Activated CD4-positive, alpha-beta T cell treated with anti-CD3 and anti-CD28 coated beads for 36 hours (primary cell): ENCODE measurements at regions of chr3 and their contacts with region 1.

Region 1: DNA sequence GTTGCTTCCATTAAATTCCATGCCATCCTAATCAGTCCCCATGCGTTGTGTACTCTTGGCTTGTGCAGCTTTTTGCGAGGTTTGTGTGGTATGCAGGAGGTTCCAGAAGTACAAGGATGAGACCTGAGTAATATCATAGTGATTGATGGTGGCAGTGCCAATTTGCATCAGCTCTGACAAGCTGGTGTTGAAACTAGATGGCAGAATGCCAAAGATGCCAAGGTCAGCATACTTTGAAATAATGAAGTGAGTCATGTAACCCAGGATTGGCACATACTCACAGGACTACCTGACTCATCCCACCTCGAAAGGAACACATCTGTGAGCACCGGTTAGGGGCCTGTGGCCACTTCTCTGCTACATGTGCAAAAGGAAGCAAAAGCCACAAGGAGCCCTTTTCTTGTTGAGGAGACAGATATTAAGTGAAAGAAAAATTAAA is 14.3 kb downstream of the KAT2B start:
- DNase-seq: peak; percentile 83
- ATAC-seq: peak; percentile 85
- H3K4me3 Mint-ChIP-seq: no peak overlapping the region
- H3K27ac Mint-ChIP-seq: no peak overlapping the region
- H3K4me1 Mint-ChIP-seq: peaks cover 38% of the 10 kb centered on the region
- H3K27me3 Mint-ChIP-seq: no peaks in the 10 kb centered on the region

Region 2: DNA sequence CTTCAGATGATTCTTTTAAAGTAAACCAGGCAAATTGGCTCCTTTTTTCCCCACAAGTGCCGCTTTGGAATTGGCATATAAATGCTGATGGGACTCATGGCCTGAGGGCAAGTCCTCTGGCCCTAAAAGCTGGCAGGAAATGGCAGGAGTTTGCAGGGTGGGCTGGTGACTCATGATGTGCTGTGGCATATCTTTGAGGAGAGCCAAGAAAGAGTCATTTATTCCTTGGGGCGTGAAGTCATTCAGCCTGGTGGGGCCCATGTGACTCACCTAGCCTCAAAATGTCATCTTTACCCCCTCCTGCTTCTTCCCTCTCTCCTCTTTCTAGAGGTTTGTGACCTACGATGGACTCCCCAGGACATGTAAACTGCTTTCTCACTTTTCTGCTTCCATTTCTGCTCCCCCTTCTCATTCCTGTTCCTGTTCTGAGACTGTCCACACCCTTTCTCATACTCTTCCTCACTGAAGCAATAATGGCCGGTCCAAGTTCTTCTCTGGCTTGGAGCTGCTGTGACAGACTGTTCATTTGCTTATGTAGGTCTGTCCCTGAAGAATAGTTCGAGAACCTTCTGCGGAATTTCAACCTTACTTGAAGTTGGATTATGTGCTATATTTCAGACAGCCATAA is 1955.5 kb before region 1 on chr3:
- CTCF ChIA-PET with region 1: no interaction called
- POLR2A ChIA-PET with region 1: no interaction called
- intact Hi-C with region 1: loop called in 1 of 2 experiments (anchors 5 kb)
- DNase-seq: peak; percentile 82
- ATAC-seq: peak; percentile 94
- H3K4me3 Mint-ChIP-seq: peak overlapping the region; percentile 5
- H3K27ac Mint-ChIP-seq: peak overlapping the region; percentile 83
- H3K4me1 Mint-ChIP-seq: peaks cover 24% of the 10 kb centered on the region
- H3K27me3 Mint-ChIP-seq: peaks cover 7% of the 10 kb centered on the region

Region 3: DNA sequence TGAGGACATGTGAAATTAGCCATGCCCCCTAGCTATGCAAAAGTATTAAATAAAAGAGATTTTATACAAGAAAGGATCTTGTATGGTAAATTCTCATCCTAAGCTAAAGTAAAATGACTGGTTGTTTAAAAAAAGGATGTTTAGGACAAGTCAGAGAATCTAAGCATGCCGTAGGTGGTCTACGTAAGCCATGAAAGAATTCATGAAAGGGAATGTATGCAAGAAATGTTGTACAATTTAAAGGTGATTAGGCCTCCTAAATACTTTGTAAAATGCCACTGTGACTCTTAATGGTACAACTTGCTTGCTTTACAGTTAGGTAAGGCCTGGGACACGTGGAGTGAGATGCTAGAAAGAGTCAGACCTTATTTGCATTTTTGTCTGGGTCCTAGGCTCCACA is 329.6 kb before region 1 on chr3:
- CTCF ChIA-PET with region 1: no interaction called
- POLR2A ChIA-PET with region 1: no interaction called
- intact Hi-C with region 1: no loop called
- DNase-seq: no peak
- ATAC-seq: no peak
- H3K4me3 Mint-ChIP-seq: no peak overlapping the region
- H3K27ac Mint-ChIP-seq: no peak overlapping the region
- H3K4me1 Mint-ChIP-seq: no peaks in the 10 kb centered on the region
- H3K27me3 Mint-ChIP-seq: no peaks in the 10 kb centered on the region

Region 4: DNA sequence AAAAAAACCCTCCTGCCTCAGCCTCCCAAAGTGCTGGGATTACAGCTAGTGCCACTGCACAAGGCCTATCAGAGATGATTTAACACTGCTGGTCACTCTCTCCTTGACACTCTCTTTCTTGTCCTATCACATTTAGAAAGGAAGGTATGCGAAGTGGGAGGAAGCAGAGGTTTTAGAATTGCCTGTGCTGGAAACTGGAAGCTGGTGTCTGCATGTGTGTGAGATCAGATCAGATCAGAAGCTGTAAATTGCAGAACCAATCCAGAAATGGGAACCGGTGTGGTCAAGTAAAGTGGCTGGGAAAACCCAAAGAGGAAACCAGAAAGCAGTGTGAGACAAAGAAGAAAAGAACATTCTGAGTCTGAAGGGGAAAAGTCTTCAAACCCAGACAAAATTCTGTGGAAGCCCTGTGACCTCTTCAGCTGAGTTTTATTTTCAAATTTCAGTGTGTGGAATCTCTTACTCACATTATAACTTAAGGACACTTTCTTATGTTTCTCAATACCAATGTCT is 123.3 kb before region 1 on chr3:
- CTCF ChIA-PET with region 1: no interaction called
- POLR2A ChIA-PET with region 1: interaction called, 4 read pairs
- intact Hi-C with region 1: loop called (anchors 1 kb)
- DNase-seq: peak; percentile 71
- ATAC-seq: peak; percentile 82
- H3K4me3 Mint-ChIP-seq: peak overlapping the region; percentile 21
- H3K27ac Mint-ChIP-seq: peak overlapping the region; percentile 83
- H3K4me1 Mint-ChIP-seq: peaks cover 32% of the 10 kb centered on the region
- H3K27me3 Mint-ChIP-seq: peaks cover 12% of the 10 kb centered on the region

Region 5: GRCh38 chr3:19946832-19947548 is 107.6 kb before region 1 on chr3 and contains the start of gene RAB5A:
- CTCF ChIA-PET with region 1: interaction called, 3 read pairs
- POLR2A ChIA-PET with region 1: interaction called, 3 read pairs
- intact Hi-C with region 1: loop called in 1 of 2 experiments (anchors 1 kb)
- DNase-seq: peak; percentile 99
- ATAC-seq: peak; percentile 90
- H3K4me3 Mint-ChIP-seq: peak within 1 kb of the TSS; percentile 96
- H3K27ac Mint-ChIP-seq: peak within 1 kb of the TSS; percentile 99
- H3K4me1 Mint-ChIP-seq: peaks cover 40% of the 10 kb centered on the region
- H3K27me3 Mint-ChIP-seq: no peaks in the 10 kb centered on the region
- total RNA-seq, gene RAB5A: 54.2 to 78.8 TPM

Region 6: DNA sequence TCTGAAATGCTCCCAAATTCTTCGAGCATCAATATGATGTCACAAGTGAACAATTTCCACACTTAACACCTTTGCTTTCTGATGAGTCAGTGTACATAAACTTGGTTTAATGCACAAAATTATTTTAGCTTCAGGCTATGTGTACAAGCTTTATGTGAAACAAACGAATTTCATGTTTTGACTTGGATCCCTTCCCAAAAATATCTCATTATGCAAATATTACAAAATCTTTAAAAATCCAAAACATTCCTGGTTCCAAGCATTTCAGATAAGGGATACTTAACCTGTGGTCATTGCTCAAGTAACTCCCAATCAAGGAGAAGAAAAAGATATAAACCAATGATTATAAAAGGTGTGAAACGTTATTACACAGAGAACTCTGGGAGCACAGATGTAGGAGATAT is 82.5 kb before region 1 on chr3:
- CTCF ChIA-PET with region 1: no interaction called
- POLR2A ChIA-PET with region 1: no interaction called
- intact Hi-C with region 1: no loop called
- DNase-seq: no peak
- ATAC-seq: no peak
- H3K4me3 Mint-ChIP-seq: no peak overlapping the region
- H3K27ac Mint-ChIP-seq: no peak overlapping the region
- H3K4me1 Mint-ChIP-seq: peaks cover 21% of the 10 kb centered on the region
- H3K27me3 Mint-ChIP-seq: no peaks in the 10 kb centered on the region

Region 7: DNA sequence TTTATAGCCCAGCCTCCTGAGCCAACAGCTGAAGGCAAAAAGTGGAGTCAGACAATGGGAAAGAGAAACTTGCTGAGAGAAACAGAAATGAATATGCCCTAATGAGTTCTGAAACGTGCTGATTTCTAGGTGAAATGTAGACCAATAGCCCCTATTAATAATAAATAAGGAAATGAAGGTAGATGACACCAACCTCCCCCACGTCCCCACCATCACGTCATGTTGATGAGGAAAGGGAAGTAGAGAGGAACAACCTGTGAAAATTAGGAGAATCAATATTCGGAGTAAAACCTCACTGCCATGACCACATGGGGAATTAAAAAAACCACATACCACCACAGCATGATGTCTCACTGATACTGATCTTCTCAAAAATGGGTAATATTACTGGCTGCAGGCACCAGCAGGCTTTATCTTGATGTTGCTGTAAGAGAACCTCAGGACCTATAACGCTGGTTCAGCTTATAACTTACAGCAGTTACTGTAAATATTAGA is 49.6 kb after region 1 on chr3:
- CTCF ChIA-PET with region 1: no interaction called
- POLR2A ChIA-PET with region 1: interaction called, 3 read pairs
- intact Hi-C with region 1: loop called (anchors 1 kb)
- DNase-seq: peak; percentile 39
- ATAC-seq: peak; percentile 78
- H3K4me3 Mint-ChIP-seq: peak overlapping the region; percentile 26
- H3K27ac Mint-ChIP-seq: peak overlapping the region; percentile 84
- H3K4me1 Mint-ChIP-seq: peaks cover 27% of the 10 kb centered on the region
- H3K27me3 Mint-ChIP-seq: no peaks in the 10 kb centered on the region

Region 8: GRCh38 chr3:20837676-20838302 is 783.2 kb after region 1 on chr3:
- CTCF ChIA-PET with region 1: no interaction called
- POLR2A ChIA-PET with region 1: no interaction called
- intact Hi-C with region 1: no loop called
- DNase-seq: no peak
- ATAC-seq: no peak
- H3K4me3 Mint-ChIP-seq: no peak overlapping the region
- H3K27ac Mint-ChIP-seq: no peak overlapping the region
- H3K4me1 Mint-ChIP-seq: no peaks in the 10 kb centered on the region
- H3K27me3 Mint-ChIP-seq: no peaks in the 10 kb centered on the region